ENCODE measurements at regions of chr4 and their contacts with region 1.

Region 1: DNA sequence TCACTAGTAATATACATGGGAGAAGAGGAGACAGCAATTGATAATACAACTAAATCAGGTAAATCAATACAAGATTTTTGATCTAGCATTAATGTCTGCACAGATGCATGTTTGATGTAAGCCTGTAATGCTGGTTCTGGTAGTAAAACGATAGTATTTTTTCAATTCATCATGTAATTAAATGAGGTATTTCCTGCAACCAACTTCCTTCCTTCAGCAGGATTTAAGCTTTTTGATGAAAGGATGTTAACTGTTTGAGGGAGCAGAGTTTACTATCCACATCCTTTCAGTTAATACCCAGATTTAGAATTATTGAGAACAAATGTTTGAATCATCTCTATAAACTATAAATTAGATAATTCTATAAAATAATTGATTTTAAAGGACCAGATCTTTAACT is 31.4 kb upstream of the NFKB1 start:
- DNase-seq: no peak
- H3K4me3 ChIP-seq: no peak overlapping the region
- H3K27ac ChIP-seq: no peak overlapping the region
- H3K4me1 ChIP-seq: no peaks in the 10 kb centered on the region
- H3K27me3 ChIP-seq: no peaks in the 10 kb centered on the region
- CTCF ChIP-seq: no peak
- POLR2A ChIP-seq: no peak

Region 2: GRCh38 chr4:102503831-102504786 is 34.3 kb after region 1 on chr4:
- intact Hi-C with region 1: loop called (anchors 2 kb)
- DNase-seq: no peak
- H3K4me3 ChIP-seq: peak overlapping the region in 1 of 3 donors; percentile 93
- H3K27ac ChIP-seq: peak overlapping the region; percentile 97 to 99
- H3K4me1 ChIP-seq: peaks cover 0 to 8% of the 10 kb centered on the region in 2 donors
- H3K27me3 ChIP-seq: no peaks in the 10 kb centered on the region
- CTCF ChIP-seq: no peak
- POLR2A ChIP-seq: no peak

Measured in breast epithelium (tissue), 4 donors.